ENCODE measurements at regions of chr11 and their contacts with region 1.

Region 1: DNA sequence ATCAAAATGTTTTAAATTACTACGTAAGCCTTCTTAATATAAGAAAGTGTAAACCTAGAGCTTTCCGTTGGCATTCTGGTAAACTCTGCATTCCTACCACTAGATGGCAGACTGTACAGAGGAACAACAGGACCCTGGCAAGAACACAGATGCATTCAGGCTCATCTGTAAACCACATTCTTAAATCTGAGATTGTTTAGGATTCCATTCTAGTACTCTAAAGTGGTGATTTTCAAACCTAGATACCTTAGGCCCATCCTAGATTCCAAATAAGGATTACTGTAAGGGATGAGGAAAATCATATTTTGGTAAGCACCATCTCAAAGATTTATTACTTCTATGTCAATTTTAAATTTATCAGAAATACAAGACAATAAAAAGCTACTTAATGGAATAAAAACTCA is 26.9 kb downstream of the PICALM start:
- DNase-seq: peak; percentile 86 to 91
- H3K4me3 ChIP-seq: no peak overlapping the region
- H3K4me3 Mint-ChIP-seq: no peak overlapping the region
- H3K27ac Mint-ChIP-seq: no peak overlapping the region
- H3K4me1 ChIP-seq: peaks cover 50% of the 10 kb centered on the region
- H3K4me1 Mint-ChIP-seq: peaks cover 51% of the 10 kb centered on the region
- H3K27me3 ChIP-seq: no peaks in the 10 kb centered on the region
- H3K27me3 Mint-ChIP-seq: no peaks in the 10 kb centered on the region
- CTCF ChIP-seq: peak; percentile 97 to 99

Region 2: GRCh38 chr11:86124834-86125233 is 82.9 kb after region 1 on chr11:
- CTCF ChIA-PET with region 1: no interaction called
- POLR2A ChIA-PET with region 1: no interaction called
- intact Hi-C with region 1: loop called (anchors 1 kb)
- DNase-seq: no peak
- H3K4me3 ChIP-seq: peak overlapping the region; percentile 0; the same call in 1 of the 2 replicates
- H3K4me3 Mint-ChIP-seq: peak overlapping the region; percentile 57
- H3K27ac Mint-ChIP-seq: peak overlapping the region; percentile 60
- H3K4me1 ChIP-seq: peaks cover 94% of the 10 kb centered on the region
- H3K4me1 Mint-ChIP-seq: peaks cover 63% of the 10 kb centered on the region
- H3K27me3 ChIP-seq: no peaks in the 10 kb centered on the region
- H3K27me3 Mint-ChIP-seq: no peaks in the 10 kb centered on the region
- CTCF ChIP-seq: no peak

Region 3: DNA sequence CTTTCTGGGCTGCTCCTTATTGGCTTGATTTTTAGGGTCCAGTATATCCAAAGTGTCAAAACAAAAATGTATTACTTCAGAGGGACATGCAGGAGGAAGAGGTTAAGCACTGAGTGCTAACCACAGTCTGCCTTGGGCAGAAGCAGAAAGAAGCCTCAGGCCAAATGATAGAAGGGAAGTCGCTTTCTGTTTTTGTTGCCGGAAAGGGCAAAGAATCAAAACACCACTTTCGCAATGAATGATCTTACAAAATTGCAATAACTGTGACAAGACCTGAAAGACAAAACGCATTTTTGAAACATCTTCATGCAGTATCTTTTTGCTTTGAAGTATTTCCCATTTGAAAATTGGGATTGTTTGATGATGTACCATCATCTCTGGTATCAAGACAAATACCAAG is 97.0 kb after region 1 on chr11:
- CTCF ChIA-PET with region 1: interaction called, 13 read pairs
- POLR2A ChIA-PET with region 1: no interaction called
- intact Hi-C with region 1: loop called (anchors 1 kb)
- DNase-seq: no peak
- H3K4me3 ChIP-seq: no peak overlapping the region
- H3K4me3 Mint-ChIP-seq: no peak overlapping the region
- H3K27ac Mint-ChIP-seq: no peak overlapping the region
- H3K4me1 ChIP-seq: peaks cover 42% of the 10 kb centered on the region
- H3K4me1 Mint-ChIP-seq: peaks cover 18% of the 10 kb centered on the region
- H3K27me3 ChIP-seq: no peaks in the 10 kb centered on the region
- H3K27me3 Mint-ChIP-seq: no peaks in the 10 kb centered on the region
- CTCF ChIP-seq: no peak

Region 4: GRCh38 chr11:86218125-86219084 is 176.4 kb after region 1 on chr11:
- CTCF ChIA-PET with region 1: interaction called, 6 read pairs
- POLR2A ChIA-PET with region 1: no interaction called
- intact Hi-C with region 1: loop called (anchors 1 kb)
- DNase-seq: peak; percentile 74 to 88
- H3K4me3 ChIP-seq: no peak overlapping the region
- H3K4me3 Mint-ChIP-seq: peak overlapping the region; percentile 15
- H3K27ac Mint-ChIP-seq: peak overlapping the region; percentile 25
- H3K4me1 ChIP-seq: peaks cover 12% of the 10 kb centered on the region
- H3K4me1 Mint-ChIP-seq: peaks cover 22% of the 10 kb centered on the region
- H3K27me3 ChIP-seq: no peaks in the 10 kb centered on the region
- H3K27me3 Mint-ChIP-seq: no peaks in the 10 kb centered on the region
- CTCF ChIP-seq: peak; percentile 98

Region 5: GRCh38 chr11:86230921-86231430 is 189.0 kb after region 1 on chr11:
- CTCF ChIA-PET with region 1: interaction called, 15 read pairs
- POLR2A ChIA-PET with region 1: no interaction called
- intact Hi-C with region 1: loop called (anchors 5 kb)
- DNase-seq: no peak
- H3K4me3 ChIP-seq: no peak overlapping the region
- H3K4me3 Mint-ChIP-seq: no peak overlapping the region
- H3K27ac Mint-ChIP-seq: no peak overlapping the region
- H3K4me1 ChIP-seq: peaks cover 13% of the 10 kb centered on the region
- H3K4me1 Mint-ChIP-seq: peaks cover 24% of the 10 kb centered on the region
- H3K27me3 ChIP-seq: no peaks in the 10 kb centered on the region
- H3K27me3 Mint-ChIP-seq: no peaks in the 10 kb centered on the region
- CTCF ChIP-seq: no peak

Region 6: GRCh38 chr11:86291466-86292262 is 249.7 kb after region 1 on chr11:
- CTCF ChIA-PET with region 1: no interaction called
- POLR2A ChIA-PET with region 1: no interaction called
- intact Hi-C with region 1: loop called (anchors 2 kb)
- DNase-seq: peak; percentile 63 to 82
- H3K4me3 ChIP-seq: no peak overlapping the region
- H3K4me3 Mint-ChIP-seq: no peak overlapping the region
- H3K27ac Mint-ChIP-seq: no peak overlapping the region
- H3K4me1 ChIP-seq: 0 out of 2 replicates have a peak, but pooled peaks cover 4% of the 10 kb centered on the region
- H3K4me1 Mint-ChIP-seq: no peaks in the 10 kb centered on the region
- H3K27me3 ChIP-seq: no peaks in the 10 kb centered on the region
- H3K27me3 Mint-ChIP-seq: no peaks in the 10 kb centered on the region
- CTCF ChIP-seq: peak; percentile 92 to 98

Measured in Caco-2 (cell line).